ENCODE measurements at regions of chr14 and their contacts with region 1.

Region 1: GRCh38 chr14:70907176-70907995 is at the start of gene PCNX1:
- DNase-seq: peak; percentile 91 to 95 (median 94)
- ATAC-seq: peak; percentile 87
- H3K4me3 ChIP-seq: peak within 1 kb of the TSS; percentile 93
- H3K4me3 Mint-ChIP-seq: peak within 1 kb of the TSS; percentile 87 to 99 (median 94)
- H3K27ac ChIP-seq: peak within 1 kb of the TSS; percentile 87
- H3K27ac Mint-ChIP-seq: peak within 1 kb of the TSS; percentile 93 to 99 (median 97)
- H3K4me1 ChIP-seq: peaks cover 9 to 34% of the 10 kb centered on the region in 2 donors
- H3K4me1 Mint-ChIP-seq: peaks cover 49 to 75% (median 70%) of the 10 kb centered on the region in 7 donors
- H3K27me3 ChIP-seq: no peaks in the 10 kb centered on the region
- H3K27me3 Mint-ChIP-seq: no peaks in the 10 kb centered on the region
- total RNA-seq, gene PCNX1: 80.8 to 114 (median 112) TPM

Region 2: GRCh38 chr14:70640938-70641547 is 266.3 kb before region 1 on chr14:
- CTCF ChIA-PET with region 1: no interaction called
- POLR2A ChIA-PET with region 1: interaction called, 4 read pairs
- intact Hi-C with region 1: loop called in 1 of 2 experiments (anchors 2 kb)
- DNase-seq: peak; percentile 24 to 76 (median 62)
- ATAC-seq: peak; percentile 78
- H3K4me3 ChIP-seq: peak overlapping the region; percentile 75
- H3K4me3 Mint-ChIP-seq: peak overlapping the region; percentile 93 to 100 (median 98)
- H3K27ac ChIP-seq: peak overlapping the region; percentile 91
- H3K27ac Mint-ChIP-seq: peak overlapping the region; percentile 85 to 99 (median 94)
- H3K4me1 ChIP-seq: peaks cover 18 to 24% of the 10 kb centered on the region in 2 donors
- H3K4me1 Mint-ChIP-seq: peaks cover 36 to 59% (median 46%) of the 10 kb centered on the region in 7 donors
- H3K27me3 ChIP-seq: no peaks in the 10 kb centered on the region
- H3K27me3 Mint-ChIP-seq: no peaks in the 10 kb centered on the region

Region 3: GRCh38 chr14:70816525-70816924 is 90.9 kb before region 1 on chr14:
- CTCF ChIA-PET with region 1: interaction called, 9 read pairs
- POLR2A ChIA-PET with region 1: interaction called, 17 read pairs
- intact Hi-C with region 1: loop called (anchors 1 kb)
- DNase-seq: no peak
- ATAC-seq: no peak
- H3K4me3 ChIP-seq: no peak overlapping the region
- H3K4me3 Mint-ChIP-seq: no peak overlapping the region
- H3K27ac ChIP-seq: no peak overlapping the region
- H3K27ac Mint-ChIP-seq: no peak overlapping the region
- H3K4me1 ChIP-seq: peaks cover 0 to 8% of the 10 kb centered on the region in 2 donors
- H3K4me1 Mint-ChIP-seq: peaks cover 5 to 22% (median 11%) of the 10 kb centered on the region in 7 donors
- H3K27me3 ChIP-seq: no peaks in the 10 kb centered on the region
- H3K27me3 Mint-ChIP-seq: peaks cover 6 to 21% (median 6%) of the 10 kb centered on the region in 5 donors

Region 4: DNA sequence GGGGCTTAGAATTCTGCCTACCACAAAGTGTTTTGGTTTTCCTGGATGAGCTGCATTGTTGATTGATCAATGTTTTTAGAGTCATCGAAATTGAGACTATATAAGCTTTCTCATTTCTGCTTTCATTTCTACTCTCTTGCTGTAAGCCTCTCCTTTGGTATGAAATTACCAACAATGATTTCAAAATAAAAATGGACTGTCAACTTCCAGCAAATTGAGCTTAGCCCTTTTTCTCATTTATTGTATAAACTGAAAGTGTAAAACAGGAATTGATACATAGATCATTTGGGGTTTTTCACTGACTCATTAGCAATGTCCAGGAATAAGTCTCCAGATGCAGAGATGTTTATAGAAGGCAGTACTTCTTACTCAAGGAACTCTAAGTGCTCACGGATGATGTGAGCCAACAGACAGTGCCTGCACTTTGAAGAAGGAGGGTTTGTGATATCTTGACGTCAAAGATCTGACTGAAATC is 20.1 kb before region 1 on chr14:
- CTCF ChIA-PET with region 1: interaction called, 28 read pairs
- POLR2A ChIA-PET with region 1: interaction called, 56 read pairs
- intact Hi-C with region 1: loop called (anchors 1 kb)
- DNase-seq: peak in 1 of 9 donors; percentile 6
- ATAC-seq: peak; percentile 49
- H3K4me3 ChIP-seq: peak overlapping the region; percentile 34
- H3K4me3 Mint-ChIP-seq: peak overlapping the region; percentile 39 to 81 (median 70)
- H3K27ac ChIP-seq: peak overlapping the region; percentile 52
- H3K27ac Mint-ChIP-seq: peak overlapping the region; percentile 53 to 91 (median 87)
- H3K4me1 ChIP-seq: peaks cover 62 to 66% of the 10 kb centered on the region in 2 donors
- H3K4me1 Mint-ChIP-seq: peaks cover 60 to 97% (median 76%) of the 10 kb centered on the region in 7 donors
- H3K27me3 ChIP-seq: no peaks in the 10 kb centered on the region
- H3K27me3 Mint-ChIP-seq: no peaks in the 10 kb centered on the region

Region 5: DNA sequence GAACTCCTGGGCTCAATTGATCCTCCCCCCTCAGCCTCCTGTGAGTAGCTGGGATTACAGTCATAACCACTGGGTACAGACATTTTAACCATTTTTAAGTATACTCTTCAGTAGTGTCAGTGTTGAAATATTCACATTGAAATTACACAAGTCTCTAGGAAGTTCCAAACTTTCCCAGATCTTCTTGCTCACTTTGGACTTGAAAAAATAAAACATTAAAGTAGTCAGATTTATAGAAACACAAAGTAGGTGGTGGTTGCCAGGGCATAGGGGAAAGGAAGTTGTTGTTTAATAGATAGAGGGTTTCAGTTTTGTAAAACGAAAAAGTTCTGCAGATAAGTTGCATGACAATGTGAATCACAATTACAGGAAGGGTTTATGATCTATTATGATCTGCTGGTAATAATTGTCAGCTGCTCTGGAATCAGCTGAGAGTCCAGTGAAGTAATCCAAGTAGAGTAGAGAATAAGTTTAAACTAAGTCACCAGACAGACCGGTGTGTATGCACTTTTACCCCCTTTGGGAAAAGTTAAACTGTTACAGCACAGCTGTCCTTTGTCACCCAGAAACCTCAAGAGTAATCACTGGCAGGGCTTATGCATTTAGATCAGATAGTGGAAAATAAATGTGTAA is 27.2 kb after region 1 on chr14:
- CTCF ChIA-PET with region 1: interaction called, 16 read pairs
- POLR2A ChIA-PET with region 1: interaction called, 68 read pairs
- intact Hi-C with region 1: loop called in 1 of 2 experiments (anchors 2 kb)
- DNase-seq: peak in 2 of 9 donors; percentile 19 to 32
- ATAC-seq: peak; percentile 70
- H3K4me3 ChIP-seq: peak overlapping the region; percentile 35
- H3K4me3 Mint-ChIP-seq: peak overlapping the region; percentile 12 to 81 (median 75)
- H3K27ac ChIP-seq: peak overlapping the region; percentile 19
- H3K27ac Mint-ChIP-seq: peak overlapping the region; percentile 77 to 93 (median 88)
- H3K4me1 ChIP-seq: peaks cover 29 to 32% of the 10 kb centered on the region in 2 donors
- H3K4me1 Mint-ChIP-seq: peaks cover 45 to 96% (median 87%) of the 10 kb centered on the region in 7 donors
- H3K27me3 ChIP-seq: no peaks in the 10 kb centered on the region
- H3K27me3 Mint-ChIP-seq: no peaks in the 10 kb centered on the region

Region 6: DNA sequence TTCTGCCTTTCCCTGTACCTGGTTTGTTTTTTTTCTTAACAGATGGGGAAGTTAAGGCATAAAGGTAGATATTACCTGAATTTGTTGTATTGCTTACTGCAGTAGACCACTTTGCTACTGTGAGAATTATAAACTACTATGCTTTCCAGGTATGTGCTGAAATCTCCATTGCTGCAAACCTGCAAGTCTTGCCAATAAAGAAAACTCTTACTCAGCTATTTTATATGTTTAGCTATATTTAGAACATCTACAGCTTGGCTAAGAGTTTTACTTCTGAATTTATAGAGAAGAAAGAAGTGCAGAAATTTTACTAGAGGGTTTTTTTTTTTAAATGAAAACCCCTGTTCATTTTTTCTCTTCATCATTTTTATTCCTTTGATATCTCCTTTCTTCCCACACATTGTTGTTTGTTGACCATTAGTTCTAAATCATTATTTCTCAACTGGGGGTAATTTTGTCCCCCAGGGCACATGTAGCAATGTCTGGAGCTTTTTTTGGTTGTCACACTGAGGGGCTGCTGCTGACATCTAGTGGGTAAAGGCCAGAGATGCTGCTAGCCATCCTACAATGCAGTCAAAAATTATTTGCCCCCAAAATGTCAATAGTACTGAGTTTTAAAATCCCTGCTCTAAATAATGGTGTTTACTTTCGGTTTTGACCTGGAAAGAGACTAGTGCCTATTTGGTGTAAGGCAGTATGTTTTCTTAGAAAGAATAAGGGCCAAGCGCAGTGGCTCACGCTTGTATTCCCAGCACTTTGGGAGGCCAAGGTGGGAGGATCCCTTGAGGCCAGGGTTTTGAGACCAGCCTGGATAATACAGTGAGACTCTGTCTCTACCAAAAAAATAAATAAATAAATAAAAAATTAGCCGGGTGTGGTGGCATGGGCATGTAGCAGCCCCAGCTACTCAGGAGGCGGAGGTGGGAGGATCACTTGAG is 48.4 kb after region 1 on chr14:
- CTCF ChIA-PET with region 1: interaction called, 114 read pairs
- POLR2A ChIA-PET with region 1: interaction called, 104 read pairs
- intact Hi-C with region 1: loop called (anchors 1 kb)
- DNase-seq: peak in 7 of 9 donors; percentile 29 to 67 (median 52)
- ATAC-seq: peak; percentile 80
- H3K4me3 ChIP-seq: no peak overlapping the region
- H3K4me3 Mint-ChIP-seq: peak overlapping the region in 2 of 10 donors; percentile 12 to 38
- H3K27ac ChIP-seq: no peak overlapping the region
- H3K27ac Mint-ChIP-seq: peak overlapping the region in 5 of 9 donors; percentile 8 to 85 (median 13)
- H3K4me1 ChIP-seq: peaks cover 18 to 19% of the 10 kb centered on the region in 2 donors
- H3K4me1 Mint-ChIP-seq: peaks cover 25 to 53% (median 40%) of the 10 kb centered on the region in 7 donors
- H3K27me3 ChIP-seq: no peaks in the 10 kb centered on the region
- H3K27me3 Mint-ChIP-seq: no peaks in the 10 kb centered on the region